Activated T-helper 1 cell treated with anti-CD3 and anti-CD28 coated beads, Interleukin-12 subunit alpha, Interleukin-12 subunit beta, Interleukin-2, Interleukin-4 antibody, amounts not matched to agents 30 ng/mL and 10 ng/mL and 1 ng/mL, durations not matched to agents 14 hours and 24 hours and 36 hours (primary cell): ENCODE measurements at regions of chr4 and their contacts with region 1.

Region 1: GRCh38 chr4:102826890-102827673 is at the start of gene UBE2D3:
- DNase-seq: peak; percentile 92
- H3K4me3 Mint-ChIP-seq: no peak within 1 kb of the TSS
- H3K27ac Mint-ChIP-seq: no peak within 1 kb of the TSS
- H3K4me1 Mint-ChIP-seq: peaks cover 38% of the 10 kb centered on the region
- H3K27me3 Mint-ChIP-seq: no peaks in the 10 kb centered on the region
- total RNA-seq, gene UBE2D3: 480 and 507 TPM in 2 replicates

Region 2: DNA sequence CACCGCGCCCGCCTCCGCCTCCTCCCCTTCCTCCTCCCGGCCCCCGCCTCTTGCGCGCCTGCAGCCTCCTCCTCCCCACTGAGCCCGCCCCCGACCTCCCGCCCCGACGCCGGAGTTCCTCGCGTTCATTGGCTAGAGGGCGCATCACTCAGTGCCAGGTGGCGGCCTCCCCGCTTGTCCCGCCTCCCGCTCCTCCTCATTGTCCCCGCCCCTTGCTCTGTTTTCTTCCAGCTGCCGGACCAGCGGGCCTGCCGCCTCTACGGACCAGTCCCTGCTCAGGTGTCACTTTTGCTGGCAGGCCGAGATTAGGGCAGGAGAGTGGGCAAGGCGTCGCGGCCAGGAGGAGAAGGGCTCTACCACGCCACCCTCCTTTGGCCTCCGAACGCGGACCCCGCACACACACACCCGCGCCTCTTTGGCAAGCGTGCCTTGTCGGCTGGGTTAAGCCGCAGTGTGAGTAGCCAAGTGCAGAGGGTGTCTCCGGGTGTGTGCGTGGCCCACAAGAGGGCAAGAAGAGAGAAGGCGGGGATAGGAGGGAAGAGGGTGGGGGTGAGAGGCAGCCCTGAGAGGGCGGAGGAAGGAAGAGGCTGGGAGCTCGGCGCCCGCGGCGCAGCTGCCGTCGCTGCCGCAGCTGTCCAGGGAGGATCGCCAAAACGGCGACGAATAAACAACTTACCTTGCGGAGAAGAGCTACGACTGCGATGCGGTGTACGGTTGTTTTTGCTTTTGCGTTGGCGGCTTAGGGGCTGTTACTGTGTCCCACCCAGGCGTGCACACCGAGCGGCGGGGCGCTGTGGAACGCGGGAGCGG is 1479.3 kb before region 1 on chr4:
- intact Hi-C with region 1: loop called (anchors 5 kb)
- DNase-seq: peak; percentile 95
- H3K4me3 Mint-ChIP-seq: peak overlapping the region; percentile 92
- H3K27ac Mint-ChIP-seq: peak overlapping the region; percentile 88
- H3K4me1 Mint-ChIP-seq: peaks cover 33% of the 10 kb centered on the region
- H3K27me3 Mint-ChIP-seq: peaks cover 53% of the 10 kb centered on the region

Region 3: DNA sequence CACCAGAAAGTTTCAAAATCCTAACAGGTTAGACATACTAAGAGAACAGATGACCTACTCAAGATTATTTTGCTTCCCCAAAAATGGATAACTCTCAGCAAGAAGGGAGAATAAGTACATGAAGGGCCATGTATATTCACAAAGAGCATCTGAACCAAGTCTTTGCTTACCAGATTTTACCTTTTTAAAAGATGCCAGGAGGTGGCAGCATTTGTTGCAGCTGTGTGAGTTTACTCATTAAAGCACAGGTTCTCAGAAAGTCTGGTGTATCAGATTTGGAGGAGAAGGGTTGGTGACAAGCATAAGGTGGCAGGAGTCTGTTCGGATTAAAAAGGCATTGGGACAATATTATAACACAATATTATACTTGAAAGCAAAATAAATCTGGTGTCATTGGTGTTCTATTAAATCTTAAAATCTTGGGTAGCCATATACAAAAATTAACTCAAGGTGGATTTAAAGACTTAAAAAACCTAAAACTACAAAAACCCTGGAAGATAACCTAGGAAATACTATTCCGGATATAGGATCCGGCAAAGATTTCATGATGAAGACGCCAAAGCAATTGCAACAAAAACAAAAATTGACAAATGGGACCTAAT is 377.2 kb before region 1 on chr4:
- intact Hi-C with region 1: loop called (anchors 5 kb)
- DNase-seq: peak; percentile 52
- H3K4me3 Mint-ChIP-seq: no peak overlapping the region
- H3K27ac Mint-ChIP-seq: no peak overlapping the region
- H3K4me1 Mint-ChIP-seq: peaks cover 36% of the 10 kb centered on the region
- H3K27me3 Mint-ChIP-seq: peaks cover under 1% of the 10 kb centered on the region

Region 4: DNA sequence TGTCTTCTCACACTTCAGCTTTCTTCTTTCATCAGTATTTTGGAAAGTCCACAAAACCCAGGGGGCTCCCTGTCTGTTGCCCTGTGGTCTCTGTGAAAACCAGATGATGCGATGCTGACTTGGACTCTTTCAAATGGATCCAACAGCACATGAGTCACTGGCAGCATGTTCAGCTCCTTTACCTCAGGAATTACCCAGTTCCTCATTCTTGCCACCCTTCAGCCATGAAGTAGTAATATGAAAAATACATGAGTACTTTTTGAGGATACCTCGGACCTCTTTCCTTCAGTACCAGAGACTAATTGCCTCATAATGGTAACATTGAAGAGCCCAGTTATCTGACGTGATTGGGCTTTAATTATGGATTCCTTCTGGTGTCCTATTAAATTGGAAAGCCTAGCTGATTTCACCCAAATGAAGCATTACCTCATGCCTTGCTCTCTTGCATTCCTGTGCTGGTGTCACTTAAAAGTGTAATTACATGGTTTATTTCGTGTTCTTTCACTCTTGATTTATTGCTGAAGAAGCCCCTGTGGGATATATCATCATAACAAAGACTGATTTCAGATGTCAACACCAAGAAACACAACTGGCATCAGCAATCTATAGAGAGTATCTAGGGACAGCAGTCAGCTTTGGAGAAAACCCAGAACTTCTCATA is 262.6 kb before region 1 on chr4:
- intact Hi-C with region 1: no loop called
- DNase-seq: no peak
- H3K4me3 Mint-ChIP-seq: no peak overlapping the region
- H3K27ac Mint-ChIP-seq: peak overlapping the region; percentile 69
- H3K4me1 Mint-ChIP-seq: peaks cover 79% of the 10 kb centered on the region
- H3K27me3 Mint-ChIP-seq: no peaks in the 10 kb centered on the region

Region 5: DNA sequence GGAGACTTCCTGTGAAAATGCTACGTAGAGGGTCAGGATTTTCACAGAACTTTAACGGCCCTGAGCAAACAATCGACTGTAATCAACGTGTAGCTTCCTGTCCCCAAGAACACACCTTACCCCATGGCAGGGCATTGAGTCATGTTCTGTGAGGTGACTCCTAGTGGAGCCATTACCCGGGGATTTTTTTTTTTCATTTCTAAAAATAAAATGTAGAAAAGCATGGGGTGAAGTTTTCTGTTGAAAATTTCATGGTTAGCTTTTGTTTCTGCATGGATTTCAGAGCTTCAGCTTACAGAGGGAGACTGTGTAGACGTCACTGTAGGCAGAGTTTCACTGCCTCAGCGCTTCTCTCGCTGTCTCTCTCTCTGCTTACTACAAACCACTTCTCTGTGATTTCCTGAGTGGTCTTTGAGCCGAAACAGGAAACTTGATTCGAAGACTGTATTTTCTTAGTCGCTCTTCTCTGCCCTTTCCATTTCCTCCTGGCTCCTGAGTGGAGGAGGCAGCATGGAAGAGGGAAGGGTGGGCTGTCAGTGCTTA is 214.2 kb before region 1 on chr4:
- intact Hi-C with region 1: loop called (anchors 2 kb)
- DNase-seq: peak; percentile 41
- H3K4me3 Mint-ChIP-seq: peak overlapping the region; percentile 70
- H3K27ac Mint-ChIP-seq: peak overlapping the region; percentile 95
- H3K4me1 Mint-ChIP-seq: peaks cover 83% of the 10 kb centered on the region
- H3K27me3 Mint-ChIP-seq: no peaks in the 10 kb centered on the region

Region 6: DNA sequence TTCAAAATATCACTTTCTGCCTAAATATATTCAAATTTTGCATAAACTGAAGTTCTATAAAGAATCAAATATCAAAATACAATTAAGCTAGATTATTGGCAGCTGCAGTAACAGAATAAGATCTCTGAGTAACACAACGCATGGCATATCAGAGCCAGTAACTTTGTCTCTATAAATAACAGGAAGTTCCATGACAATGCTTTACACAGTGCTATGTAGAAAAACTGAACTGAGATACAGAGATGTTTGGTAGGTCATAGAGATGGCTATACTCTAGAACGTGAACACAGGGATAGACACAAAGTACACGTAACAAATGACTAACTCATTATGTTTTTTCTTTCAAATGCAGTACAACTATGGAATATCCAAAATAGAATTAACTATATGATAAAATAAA is 17.9 kb before region 1 on chr4:
- intact Hi-C with region 1: loop called (anchors 2 kb)
- DNase-seq: no peak
- H3K4me3 Mint-ChIP-seq: no peak overlapping the region
- H3K27ac Mint-ChIP-seq: peak overlapping the region; percentile 59
- H3K4me1 Mint-ChIP-seq: peaks cover 72% of the 10 kb centered on the region
- H3K27me3 Mint-ChIP-seq: no peaks in the 10 kb centered on the region

Region 7: DNA sequence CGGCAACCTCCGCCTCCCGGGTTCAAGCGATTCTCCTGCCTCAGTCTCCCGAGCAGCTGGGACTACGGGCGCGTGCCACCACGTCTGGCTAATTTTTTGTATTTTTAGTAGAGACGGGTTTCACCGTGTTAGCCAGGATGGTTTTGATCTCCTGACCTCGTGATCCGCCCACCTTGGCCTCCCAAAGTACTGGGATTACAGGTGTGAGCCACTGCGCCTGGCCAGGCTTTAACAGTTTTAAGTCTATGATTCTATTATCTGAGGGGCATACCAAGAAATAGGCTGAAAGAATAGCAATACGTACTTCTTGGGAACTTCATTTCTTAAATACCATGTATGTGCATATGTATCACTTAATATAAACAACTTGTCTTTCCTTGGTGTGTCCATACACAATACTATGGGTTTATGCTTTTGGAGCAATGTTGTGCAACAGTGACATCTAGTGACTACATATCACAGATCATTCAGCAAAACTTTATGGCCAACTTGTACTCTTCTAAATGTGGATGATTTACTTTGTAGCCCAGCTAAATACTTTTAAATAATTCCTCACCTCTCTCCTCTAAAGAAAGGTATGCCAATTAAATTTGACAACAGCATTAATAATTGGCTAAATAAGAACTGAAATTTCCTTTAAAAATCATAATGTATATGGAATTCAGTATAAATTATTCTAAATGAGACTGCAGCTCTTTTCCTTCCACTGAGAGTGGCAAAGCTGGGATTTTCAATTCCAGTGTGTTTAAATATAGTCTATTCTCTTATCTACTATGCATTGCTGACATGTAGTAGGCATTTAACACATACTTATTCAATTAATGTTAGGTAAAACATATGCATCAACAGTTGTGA is 182.0 kb after region 1 on chr4:
- intact Hi-C with region 1: loop called (anchors 1 kb)
- DNase-seq: peak; percentile 32
- H3K4me3 Mint-ChIP-seq: no peak overlapping the region
- H3K27ac Mint-ChIP-seq: no peak overlapping the region
- H3K4me1 Mint-ChIP-seq: no peaks in the 10 kb centered on the region
- H3K27me3 Mint-ChIP-seq: peaks cover 4% of the 10 kb centered on the region

Region 8: DNA sequence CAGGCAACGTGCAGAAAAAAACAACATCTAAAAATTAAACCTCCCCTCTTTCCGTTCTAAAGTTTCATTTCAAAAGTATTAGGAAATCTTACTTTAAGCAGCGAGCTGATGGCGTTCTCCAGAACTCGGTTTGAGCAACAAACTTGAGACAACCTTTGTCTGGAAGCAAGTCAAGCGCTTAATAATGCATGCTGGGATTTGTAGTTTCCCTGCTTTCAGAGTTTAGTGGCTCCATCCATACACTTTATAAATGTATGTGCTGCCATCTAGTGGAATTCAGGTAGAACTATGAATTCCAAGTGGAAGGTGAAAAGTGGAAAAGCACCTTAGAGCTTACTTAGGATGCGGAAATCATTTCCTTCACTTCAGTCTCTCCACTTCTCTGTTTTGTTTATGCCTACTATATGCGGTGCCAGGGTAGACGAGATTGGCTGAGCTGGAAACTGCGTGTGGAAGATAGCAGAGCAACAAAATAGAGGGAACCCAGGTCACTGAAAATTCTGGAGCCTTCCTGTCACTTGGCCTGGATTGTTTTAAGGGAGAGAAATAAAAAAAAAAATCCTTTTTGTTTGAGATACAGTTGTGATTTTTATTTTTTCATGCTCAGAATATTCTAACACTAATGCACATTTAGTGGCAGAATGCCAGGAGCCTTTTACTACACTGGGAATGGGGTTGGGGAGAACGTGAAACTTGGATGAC is 272.8 kb after region 1 on chr4 and contains the start of gene BDH2:
- intact Hi-C with region 1: loop called (anchors 1 kb)
- DNase-seq: peak; percentile 41
- H3K4me3 Mint-ChIP-seq: peak within 1 kb of the TSS; percentile 84
- H3K27ac Mint-ChIP-seq: peak within 1 kb of the TSS; percentile 86
- H3K4me1 Mint-ChIP-seq: peaks cover 28% of the 10 kb centered on the region
- H3K27me3 Mint-ChIP-seq: no peaks in the 10 kb centered on the region
- total RNA-seq, gene BDH2: 9.1 and 11.0 TPM in 2 replicates